Activated CD4-positive, alpha-beta T cell treated with anti-CD3 and anti-CD28 coated beads, Interleukin-2, amount 10 ng/mL, durations not matched to agents 24 days and 14 days (primary cell): ENCODE measurements at regions of chr16 and their contacts with region 1.

Region 1: GRCh38 chr16:57576429-57576870 is 34.0 kb downstream of the ADGRG5 start:
- DNase-seq: peak; percentile 95
- H3K4me3 Mint-ChIP-seq: no peak overlapping the region
- H3K27ac Mint-ChIP-seq: peak overlapping the region; percentile 96
- H3K4me1 Mint-ChIP-seq: peaks cover 52% of the 10 kb centered on the region
- H3K27me3 Mint-ChIP-seq: no peaks in the 10 kb centered on the region

Region 2: DNA sequence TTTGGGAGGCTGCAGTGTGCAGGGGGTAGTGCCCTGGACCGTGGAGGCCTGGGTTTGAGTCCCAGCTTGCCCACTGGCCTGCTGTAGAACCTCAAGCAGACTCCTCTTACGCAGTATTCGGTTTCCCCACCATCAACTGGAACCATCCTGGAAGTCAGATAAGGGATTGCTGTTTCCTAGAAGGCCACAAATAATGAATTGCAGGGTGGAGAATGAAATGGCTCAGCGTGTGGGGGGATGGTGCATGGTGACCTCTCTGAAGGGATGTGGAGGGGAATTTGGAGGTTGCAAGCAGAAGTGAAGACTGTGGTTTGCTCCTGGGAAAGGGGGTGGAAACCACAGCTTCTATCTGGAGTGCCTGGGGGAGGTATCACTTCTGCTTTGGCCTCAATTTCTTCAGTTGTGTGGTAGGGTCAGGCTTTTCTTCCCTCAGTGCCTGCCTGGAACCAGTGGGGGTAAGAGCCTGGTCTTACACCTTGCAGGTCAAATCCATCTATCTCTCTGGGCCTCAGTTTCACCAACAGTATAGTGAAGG is 32.3 kb before region 1 on chr16:
- intact Hi-C with region 1: loop called (anchors 2 kb)
- DNase-seq: peak; percentile 68
- H3K4me3 Mint-ChIP-seq: peak overlapping the region; percentile 53
- H3K27ac Mint-ChIP-seq: peak overlapping the region; percentile 13
- H3K4me1 Mint-ChIP-seq: peaks cover 41% of the 10 kb centered on the region
- H3K27me3 Mint-ChIP-seq: no peaks in the 10 kb centered on the region

Region 3: DNA sequence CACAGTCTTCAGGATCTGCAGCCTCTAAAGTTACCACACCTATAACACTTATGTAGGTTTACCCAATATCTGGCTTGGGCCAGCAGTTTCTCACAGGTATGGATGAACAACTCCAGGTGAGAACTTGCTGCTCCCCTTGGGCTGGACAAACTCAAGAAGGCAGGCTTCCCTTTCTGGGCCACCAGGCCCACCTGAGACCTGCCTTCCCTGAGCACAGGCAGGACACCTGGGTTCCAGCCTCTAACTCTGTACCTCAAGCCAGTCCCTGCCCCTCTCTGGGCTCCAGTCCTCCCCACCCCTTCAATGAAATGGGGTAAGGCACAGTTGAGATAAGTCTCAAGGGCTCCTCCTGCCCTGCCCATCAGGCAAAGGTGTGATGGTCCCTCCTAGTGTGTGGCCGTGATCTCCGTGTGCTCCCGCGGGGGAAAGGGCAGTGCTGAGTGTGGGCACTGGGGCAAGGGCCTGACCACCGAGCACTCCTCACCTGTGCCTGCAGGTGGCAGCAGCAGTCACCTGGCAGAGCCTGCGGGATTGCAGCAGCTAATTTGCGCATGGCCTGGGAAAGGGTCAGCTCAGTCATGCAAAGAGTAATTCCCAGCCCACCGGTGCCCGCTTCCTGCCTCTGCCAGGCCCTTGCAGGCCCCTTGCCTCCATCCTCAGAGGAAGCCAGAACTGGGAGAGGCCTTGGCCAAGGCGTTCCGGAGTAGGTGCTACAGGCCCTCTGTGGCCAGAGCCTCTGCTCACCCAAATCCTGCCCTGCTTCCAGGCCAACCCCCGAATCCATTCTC is 23.8 kb after region 1 on chr16:
- intact Hi-C with region 1: loop called (anchors 1 kb)
- DNase-seq: peak; percentile 80
- H3K4me3 Mint-ChIP-seq: no peak overlapping the region
- H3K27ac Mint-ChIP-seq: peak overlapping the region; percentile 95
- H3K4me1 Mint-ChIP-seq: peaks cover 41% of the 10 kb centered on the region
- H3K27me3 Mint-ChIP-seq: peaks cover 3% of the 10 kb centered on the region

Region 4: DNA sequence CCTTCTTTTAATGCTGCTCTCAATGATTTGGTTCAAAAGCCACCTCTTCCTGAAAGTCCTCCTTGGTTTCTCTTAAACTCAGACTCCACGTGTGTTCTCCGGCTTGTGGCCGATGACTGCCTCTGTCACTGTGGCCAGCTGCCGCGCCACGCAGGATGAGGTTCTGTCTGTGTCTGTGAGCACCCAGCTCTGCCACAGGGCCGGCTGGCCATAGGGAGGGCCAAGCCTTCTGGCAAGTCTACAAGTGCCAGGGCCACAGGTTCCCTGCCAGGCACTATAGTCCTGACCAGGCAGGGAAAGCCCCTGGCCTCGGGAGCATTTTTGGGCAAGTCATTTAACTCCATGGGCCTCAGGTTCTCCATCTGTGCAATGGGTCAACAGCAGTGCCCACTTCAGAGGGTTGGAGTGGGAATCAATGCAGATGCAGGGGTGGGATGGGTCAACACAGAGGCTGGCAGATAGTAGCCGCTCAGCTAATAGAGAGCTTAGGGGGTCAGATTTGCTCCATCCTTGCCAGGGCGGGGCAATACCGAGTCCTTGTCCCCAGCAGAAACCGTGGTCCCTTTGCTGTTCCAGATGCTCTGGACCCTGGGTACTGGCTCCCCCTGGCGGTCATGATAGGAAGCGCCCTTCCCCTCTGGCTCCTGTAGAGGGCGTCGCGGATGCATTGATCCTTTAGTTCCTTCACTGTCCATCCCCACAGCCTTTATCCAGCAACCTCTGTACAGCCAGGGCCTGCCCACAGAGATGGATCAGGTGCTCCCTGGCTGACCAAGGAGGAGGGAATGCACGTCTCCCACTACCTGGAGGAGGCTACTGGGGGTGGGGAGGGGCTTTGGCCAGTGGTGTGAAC is 72.4 kb after region 1 on chr16:
- intact Hi-C with region 1: loop called (anchors 1 kb)
- DNase-seq: peak; percentile 96
- H3K4me3 Mint-ChIP-seq: no peak overlapping the region
- H3K27ac Mint-ChIP-seq: peak overlapping the region; percentile 63
- H3K4me1 Mint-ChIP-seq: peaks cover 31% of the 10 kb centered on the region
- H3K27me3 Mint-ChIP-seq: no peaks in the 10 kb centered on the region

Region 5: GRCh38 chr16:57667526-57668258 is 91.2 kb after region 1 on chr16:
- intact Hi-C with region 1: no loop called
- DNase-seq: no peak
- H3K4me3 Mint-ChIP-seq: no peak overlapping the region
- H3K27ac Mint-ChIP-seq: no peak overlapping the region
- H3K4me1 Mint-ChIP-seq: no peaks in the 10 kb centered on the region
- H3K27me3 Mint-ChIP-seq: peaks cover 11% of the 10 kb centered on the region

Region 6: DNA sequence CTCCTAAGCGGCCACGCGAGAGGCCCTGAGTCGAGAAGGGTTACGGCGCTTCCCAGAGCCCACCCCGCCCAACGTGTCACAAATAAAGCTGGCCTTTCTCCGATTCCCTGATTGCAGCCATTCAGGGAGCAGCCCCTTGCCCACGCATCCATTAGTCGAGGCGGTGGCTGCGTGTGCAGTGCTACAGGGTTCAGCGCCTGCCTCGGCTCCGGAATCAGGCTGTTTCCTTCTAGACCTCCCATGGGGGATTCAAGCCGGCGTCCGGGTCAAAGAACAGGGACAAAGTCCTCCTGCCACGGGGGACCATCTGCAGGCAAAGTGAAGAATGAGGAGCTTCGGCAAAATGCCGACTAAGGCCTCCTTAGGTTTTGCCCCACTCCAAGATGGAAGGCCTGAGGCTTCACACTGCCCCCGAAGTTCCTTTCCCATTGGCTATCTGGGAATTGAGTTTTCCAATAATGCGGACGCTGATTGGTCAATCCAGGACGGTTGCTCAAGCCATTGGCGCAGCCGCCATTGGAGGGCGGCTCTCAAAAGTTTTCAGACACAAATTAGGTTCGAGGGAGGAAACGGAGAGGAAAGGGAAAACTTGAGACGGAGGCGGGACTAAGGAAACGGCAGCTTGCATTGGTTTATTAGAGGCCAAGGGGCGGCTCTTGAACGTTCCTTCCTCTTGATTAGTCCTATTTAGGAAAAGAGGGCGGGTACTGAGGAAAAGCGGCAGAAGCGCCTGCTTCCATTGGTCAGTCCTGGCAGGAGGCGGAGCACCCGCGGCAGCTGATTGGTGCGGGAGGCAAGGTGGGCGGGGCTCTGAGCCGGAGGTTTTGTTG is 158.7 kb after region 1 on chr16:
- intact Hi-C with region 1: loop called (anchors 1 kb)
- DNase-seq: peak; percentile 99
- H3K4me3 Mint-ChIP-seq: peak overlapping the region; percentile 99
- H3K27ac Mint-ChIP-seq: peak overlapping the region; percentile 98
- H3K4me1 Mint-ChIP-seq: peaks cover 21% of the 10 kb centered on the region
- H3K27me3 Mint-ChIP-seq: no peaks in the 10 kb centered on the region

Region 7: GRCh38 chr16:58000706-58001676 is 424.5 kb after region 1 on chr16 and contains the start of gene USB1:
- intact Hi-C with region 1: loop called (anchors 2 kb)
- DNase-seq: peak; percentile 97
- H3K4me3 Mint-ChIP-seq: peak within 1 kb of the TSS; percentile 96
- H3K27ac Mint-ChIP-seq: peak within 1 kb of the TSS; percentile 89
- H3K4me1 Mint-ChIP-seq: peaks cover 34% of the 10 kb centered on the region
- H3K27me3 Mint-ChIP-seq: no peaks in the 10 kb centered on the region
- total RNA-seq, gene USB1: 50.9 and 54.4 TPM in 2 replicates